Left cardiac atrium (tissue), 4 donors: ENCODE measurements at regions of chr2 and their contacts with region 1.

Region 1: GRCh38 chr2:128232965-128233789 is 85.5 kb downstream of the HS6ST1 start:
- DNase-seq: peak; percentile 91
- ATAC-seq: peak; percentile 98

Region 2: GRCh38 chr2:128069769-128070168 is 163.4 kb before region 1 on chr2:
- intact Hi-C with region 1: loop called in 1 of 2 experiments (anchors 10 kb)
- DNase-seq: no peak
- ATAC-seq: peak in 1 of 2 donors; percentile 51

Region 3: GRCh38 chr2:128178650-128179460 is 54.3 kb before region 1 on chr2:
- intact Hi-C with region 1: loop called in 1 of 2 experiments (anchors 5 kb)
- DNase-seq: peak; percentile 62
- ATAC-seq: peak; percentile 82 to 85

Region 4: DNA sequence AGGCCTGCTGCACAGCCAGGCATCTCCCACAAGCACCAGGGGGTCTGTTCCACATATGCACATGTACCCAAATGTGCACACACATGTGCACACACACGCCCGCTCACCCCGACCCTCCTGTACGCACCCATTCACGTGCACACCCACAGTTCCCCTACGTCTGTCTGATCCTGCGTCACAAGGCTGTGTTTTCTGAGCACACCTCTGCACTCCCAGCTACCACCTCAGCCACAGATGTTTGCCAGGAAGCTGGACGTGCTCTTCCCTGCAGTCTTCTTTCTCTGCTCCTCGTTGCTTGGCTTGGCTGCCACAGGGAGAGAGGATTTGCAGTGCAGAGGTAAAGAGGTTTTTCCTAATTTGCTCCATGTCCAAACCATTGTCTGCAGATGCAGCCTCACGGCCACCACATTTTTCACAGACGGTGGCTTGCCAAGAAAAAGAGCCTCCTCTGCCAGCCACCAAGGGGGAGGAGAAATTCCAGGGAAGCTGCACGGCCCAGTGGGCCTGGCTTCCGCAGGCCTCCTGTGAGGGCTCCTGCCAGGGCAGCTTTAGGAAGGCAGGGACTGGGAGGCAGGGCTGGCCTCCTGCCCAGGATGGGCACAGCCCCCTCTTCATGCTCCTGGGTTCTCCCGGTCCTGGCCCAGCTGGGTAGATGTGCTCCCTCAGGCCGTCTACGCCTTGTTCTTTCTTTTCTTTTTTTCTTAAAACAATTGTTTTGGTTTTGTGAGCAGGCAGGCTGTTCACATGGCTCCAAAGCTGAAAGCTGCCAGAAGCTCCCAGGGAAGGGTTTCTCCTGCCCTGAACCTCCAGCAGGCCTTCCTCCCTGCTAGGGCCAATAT is 114.7 kb after region 1 on chr2:
- intact Hi-C with region 1: no loop called
- DNase-seq: peak; percentile 80
- ATAC-seq: peak; percentile 96 to 97